ENCODE measurements at regions of chr3 and their contacts with region 1.

Region 1: GRCh38 chr3:32460031-32460749 is 42.5 kb downstream of the CMTM6 start:
- DNase-seq: peak; percentile 57 to 97 (median 80)
- ATAC-seq: peak; percentile 72
- H3K4me3 ChIP-seq: peak overlapping the region; percentile 34 to 37
- H3K4me3 Mint-ChIP-seq: peak overlapping the region; percentile 81
- H3K27ac ChIP-seq: peak overlapping the region; percentile 90 to 95
- H3K27ac Mint-ChIP-seq: no peak overlapping the region
- H3K4me1 ChIP-seq: peaks cover 79% of the 10 kb centered on the region
- H3K4me1 Mint-ChIP-seq: peaks cover 38% of the 10 kb centered on the region
- H3K27me3 ChIP-seq: no peaks in the 10 kb centered on the region
- H3K27me3 Mint-ChIP-seq: no peaks in the 10 kb centered on the region
- CTCF ChIP-seq: no peak

Region 2: DNA sequence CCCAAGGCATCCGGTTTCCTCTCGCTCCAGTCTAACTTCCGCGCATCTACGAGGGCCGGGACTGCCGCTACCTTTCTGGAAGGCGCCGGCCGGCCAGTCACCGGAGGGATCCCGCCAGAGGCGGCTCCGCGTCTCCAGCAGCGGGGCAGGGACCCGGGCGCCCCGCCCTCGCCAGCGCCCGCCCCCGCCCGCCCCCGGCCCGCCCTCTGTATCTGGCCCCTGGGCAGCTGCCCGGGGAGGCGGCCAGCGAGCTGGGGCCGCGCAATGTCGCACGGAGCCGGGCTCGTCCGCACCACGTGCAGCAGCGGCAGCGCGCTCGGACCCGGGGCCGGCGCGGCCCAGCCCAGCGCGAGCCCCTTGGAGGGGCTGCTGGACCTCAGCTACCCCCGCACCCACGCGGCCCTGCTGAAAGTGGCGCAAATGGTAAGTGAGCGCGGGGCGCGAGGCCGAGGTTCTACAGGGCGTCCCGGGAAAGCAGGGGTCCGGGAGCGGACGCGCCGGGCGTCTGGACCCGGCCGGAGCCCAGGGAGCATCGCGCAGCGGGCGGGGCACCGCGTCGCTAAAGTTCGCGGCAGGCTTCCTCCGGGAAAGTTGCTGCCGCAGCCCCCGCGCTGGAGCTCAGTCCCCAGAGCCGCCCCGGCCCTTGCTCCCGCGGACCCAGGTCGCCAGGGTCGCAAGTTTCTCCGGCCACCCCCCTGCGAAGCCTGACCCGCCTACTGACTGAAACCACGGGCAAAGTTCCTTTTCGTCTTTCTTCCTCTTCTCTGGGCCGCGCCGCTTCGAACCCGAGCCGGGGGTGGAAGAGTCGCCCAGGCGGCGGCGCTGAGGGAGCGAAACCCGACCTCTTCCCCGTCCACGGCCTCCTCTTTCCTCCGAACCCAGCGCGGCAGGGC is 68.3 kb before region 1 on chr3 and contains the start of gene CMTM7:
- CTCF ChIA-PET with region 1: interaction called, 105 read pairs
- POLR2A ChIA-PET with region 1: interaction called, 5 read pairs
- intact Hi-C with region 1: loop called in 1 of 2 experiments (anchors 1 kb)
- DNase-seq: peak; percentile 26 to 79 (median 61)
- ATAC-seq: peak; percentile 63
- H3K4me3 ChIP-seq: peak within 1 kb of the TSS; percentile 69 to 70
- H3K4me3 Mint-ChIP-seq: peak within 1 kb of the TSS; percentile 97
- H3K27ac ChIP-seq: peak within 1 kb of the TSS; percentile 73 to 77
- H3K27ac Mint-ChIP-seq: peak within 1 kb of the TSS; percentile 98
- H3K4me1 ChIP-seq: peaks cover 29% of the 10 kb centered on the region
- H3K4me1 Mint-ChIP-seq: peaks cover 65% of the 10 kb centered on the region
- H3K27me3 ChIP-seq: no peaks in the 10 kb centered on the region
- H3K27me3 Mint-ChIP-seq: no peaks in the 10 kb centered on the region
- CTCF ChIP-seq: no peak
- total RNA-seq, gene CMTM7: 18.8 to 19.5 TPM

Region 3: GRCh38 chr3:32414520-32415202 is 45.5 kb before region 1 on chr3:
- CTCF ChIA-PET with region 1: interaction called, 12 read pairs
- POLR2A ChIA-PET with region 1: interaction called, 9 read pairs
- intact Hi-C with region 1: loop called in 1 of 2 experiments (anchors 1 kb)
- DNase-seq: peak in 7 of 9 experiments; percentile 26 to 80 (median 63)
- ATAC-seq: peak; percentile 94
- H3K4me3 ChIP-seq: no peak overlapping the region
- H3K4me3 Mint-ChIP-seq: peak overlapping the region; percentile 55
- H3K27ac ChIP-seq: peak overlapping the region; percentile 57 to 80
- H3K27ac Mint-ChIP-seq: peak overlapping the region; percentile 97
- H3K4me1 ChIP-seq: peaks cover 56% of the 10 kb centered on the region
- H3K4me1 Mint-ChIP-seq: peaks cover 81% of the 10 kb centered on the region
- H3K27me3 ChIP-seq: no peaks in the 10 kb centered on the region
- H3K27me3 Mint-ChIP-seq: no peaks in the 10 kb centered on the region
- CTCF ChIP-seq: no peak

Region 4: DNA sequence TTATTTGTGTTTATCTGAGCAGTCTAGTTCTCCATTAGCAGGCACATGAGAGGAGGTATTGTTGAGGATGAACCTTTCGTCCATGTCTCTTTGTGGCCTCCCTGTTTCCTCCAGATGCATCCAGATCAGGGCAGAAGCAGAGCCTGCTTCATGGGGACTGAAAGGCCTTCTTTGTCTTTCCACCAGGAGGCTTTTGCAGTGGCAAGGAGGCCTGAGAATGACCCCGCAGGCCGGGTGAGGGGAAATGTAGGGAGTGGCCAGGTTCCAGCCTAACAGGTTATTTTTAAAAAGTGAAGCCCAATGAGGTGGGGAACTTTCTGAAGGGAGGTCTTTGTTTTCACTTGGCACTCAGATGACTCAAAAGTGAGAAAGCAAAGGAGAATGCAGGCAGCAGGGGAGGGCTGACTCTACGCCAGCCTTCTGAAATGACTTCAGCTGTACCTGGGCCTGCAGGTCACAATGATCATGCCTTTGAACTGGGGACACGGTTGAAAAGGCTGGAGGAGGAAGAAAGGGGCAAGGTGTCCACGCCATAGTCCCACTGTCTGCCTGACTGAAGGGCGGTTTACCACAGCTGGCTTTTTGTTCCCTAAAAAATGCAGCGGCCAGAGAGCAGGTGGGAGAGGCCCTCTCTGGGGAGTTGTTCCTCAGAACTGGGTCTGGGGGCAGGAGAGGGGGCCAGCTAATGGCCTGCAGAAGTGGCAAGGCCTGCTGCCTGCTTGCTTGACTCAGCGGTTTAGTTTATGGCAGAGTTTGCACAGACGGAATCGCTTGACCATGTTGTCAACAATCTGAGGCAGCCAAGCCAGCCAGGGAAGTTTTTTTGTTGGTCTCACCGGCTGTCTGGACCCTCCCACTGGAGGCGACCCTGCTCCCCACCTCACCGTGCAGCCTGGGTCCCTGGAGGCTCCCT is 39.8 kb before region 1 on chr3:
- CTCF ChIA-PET with region 1: interaction called, 13 read pairs
- POLR2A ChIA-PET with region 1: interaction called, 17 read pairs
- intact Hi-C with region 1: loop called (anchors 1 to 5 kb)
- DNase-seq: peak in 4 of 9 experiments; percentile 30 to 59 (median 49)
- ATAC-seq: peak; percentile 60
- H3K4me3 ChIP-seq: peak overlapping the region in 1 of 2 experiments; percentile 0
- H3K4me3 Mint-ChIP-seq: peak overlapping the region; percentile 73
- H3K27ac ChIP-seq: peak overlapping the region; percentile 15 to 54
- H3K27ac Mint-ChIP-seq: peak overlapping the region; percentile 98
- H3K4me1 ChIP-seq: peaks cover 91% of the 10 kb centered on the region
- H3K4me1 Mint-ChIP-seq: peaks cover 93% of the 10 kb centered on the region
- H3K27me3 ChIP-seq: no peaks in the 10 kb centered on the region
- H3K27me3 Mint-ChIP-seq: no peaks in the 10 kb centered on the region
- CTCF ChIP-seq: no peak

Region 5: DNA sequence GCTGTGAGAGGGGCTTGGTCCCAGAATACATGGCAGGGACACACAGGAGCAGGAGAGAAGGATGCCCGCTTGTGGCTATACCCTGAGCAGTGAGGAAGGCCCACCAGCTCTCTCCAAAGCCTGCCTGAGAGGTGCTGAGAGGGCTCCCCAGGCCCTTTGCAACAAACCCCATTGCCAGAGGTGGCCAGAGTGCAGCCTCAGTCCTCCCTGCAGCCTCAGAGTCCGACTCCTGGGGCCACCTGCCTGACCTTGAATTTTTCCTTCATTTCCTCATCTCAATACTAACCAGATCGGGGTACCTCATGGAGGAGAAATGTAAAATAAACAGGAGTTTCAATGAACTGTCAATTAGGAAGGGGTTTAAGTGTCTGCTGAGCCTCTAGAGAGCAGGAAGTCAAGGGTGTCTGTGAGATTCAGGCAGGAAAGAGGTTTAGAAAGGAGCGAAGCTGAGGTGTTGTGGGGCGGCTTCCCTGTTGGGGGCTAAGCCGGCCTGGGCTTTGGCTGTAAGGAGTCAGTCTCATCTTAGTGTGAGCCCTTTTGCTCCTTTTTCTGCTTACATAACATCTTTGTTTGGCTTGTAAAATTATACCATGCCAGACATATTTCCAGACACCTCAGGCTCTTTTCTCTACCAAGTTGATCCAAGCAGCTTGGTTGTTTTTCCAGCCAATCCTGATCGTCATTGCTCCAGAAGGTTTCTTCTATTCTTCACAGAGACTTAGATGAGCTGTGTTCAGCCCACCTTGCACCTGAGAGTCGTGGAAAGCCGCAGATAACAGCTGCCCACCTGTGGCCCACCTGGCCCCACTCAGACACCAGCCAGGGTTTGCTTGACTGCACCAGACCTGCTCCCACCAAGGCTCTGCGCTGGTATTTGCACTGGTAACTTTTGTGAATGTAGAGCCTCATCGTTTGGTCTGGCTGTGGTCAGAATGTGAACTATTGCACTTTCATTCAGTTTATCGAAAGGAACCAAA is 31.8 kb before region 1 on chr3:
- CTCF ChIA-PET with region 1: interaction called, 13 read pairs
- POLR2A ChIA-PET with region 1: interaction called, 22 read pairs
- intact Hi-C with region 1: loop called (anchors 1 to 5 kb)
- DNase-seq: peak in 8 of 9 experiments; percentile 29 to 82 (median 55)
- ATAC-seq: peak; percentile 59
- H3K4me3 ChIP-seq: peak overlapping the region in 1 of 2 experiments; percentile 26
- H3K4me3 Mint-ChIP-seq: peak overlapping the region; percentile 76
- H3K27ac ChIP-seq: peak overlapping the region; percentile 58 to 81
- H3K27ac Mint-ChIP-seq: peak overlapping the region; percentile 96
- H3K4me1 ChIP-seq: peaks cover 98% of the 10 kb centered on the region
- H3K4me1 Mint-ChIP-seq: peaks cover 94% of the 10 kb centered on the region
- H3K27me3 ChIP-seq: no peaks in the 10 kb centered on the region
- H3K27me3 Mint-ChIP-seq: no peaks in the 10 kb centered on the region
- CTCF ChIP-seq: no peak

Region 6: GRCh38 chr3:32438596-32439344 is 21.4 kb before region 1 on chr3:
- CTCF ChIA-PET with region 1: interaction called, 29 read pairs
- POLR2A ChIA-PET with region 1: interaction called, 22 read pairs
- intact Hi-C with region 1: loop called (anchors 1 to 2 kb)
- DNase-seq: peak in 4 of 9 experiments; percentile 10 to 49 (median 35)
- ATAC-seq: peak; percentile 56
- H3K4me3 ChIP-seq: no peak overlapping the region
- H3K4me3 Mint-ChIP-seq: peak overlapping the region; percentile 46
- H3K27ac ChIP-seq: peak overlapping the region in 1 of 2 experiments; percentile 31
- H3K27ac Mint-ChIP-seq: peak overlapping the region; percentile 85
- H3K4me1 ChIP-seq: peaks cover 53% of the 10 kb centered on the region
- H3K4me1 Mint-ChIP-seq: peaks cover 75% of the 10 kb centered on the region
- H3K27me3 ChIP-seq: no peaks in the 10 kb centered on the region
- H3K27me3 Mint-ChIP-seq: no peaks in the 10 kb centered on the region
- CTCF ChIP-seq: no peak

Region 7: GRCh38 chr3:32557643-32558352 is 97.6 kb after region 1 on chr3:
- CTCF ChIA-PET with region 1: no interaction called
- POLR2A ChIA-PET with region 1: no interaction called
- intact Hi-C with region 1: no loop called
- DNase-seq: no peak
- ATAC-seq: no peak
- H3K4me3 ChIP-seq: no peak overlapping the region
- H3K4me3 Mint-ChIP-seq: no peak overlapping the region
- H3K27ac ChIP-seq: no peak overlapping the region
- H3K27ac Mint-ChIP-seq: no peak overlapping the region
- H3K4me1 ChIP-seq: peaks cover 4% of the 10 kb centered on the region
- H3K4me1 Mint-ChIP-seq: peaks cover 50% of the 10 kb centered on the region
- H3K27me3 ChIP-seq: no peaks in the 10 kb centered on the region
- H3K27me3 Mint-ChIP-seq: no peaks in the 10 kb centered on the region
- CTCF ChIP-seq: no peak

Region 8: DNA sequence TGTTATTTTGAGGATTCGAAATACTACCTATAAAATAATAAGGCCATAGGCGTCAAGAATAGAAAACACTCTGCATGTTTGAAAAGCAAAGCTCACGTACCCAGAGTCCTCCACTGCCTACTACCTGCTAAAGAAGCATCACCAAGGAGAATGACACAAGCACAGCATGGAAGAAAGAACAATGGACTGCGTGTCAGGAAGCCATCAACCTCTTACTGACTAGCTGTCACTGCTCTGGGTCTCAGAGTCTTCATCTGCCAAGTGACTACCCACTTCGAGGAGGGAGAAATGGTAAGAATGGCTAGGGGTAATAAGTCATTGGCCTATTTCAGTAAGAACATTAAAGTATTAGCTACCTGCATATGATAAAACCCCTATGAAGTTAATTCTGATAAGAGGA is 1208.4 kb after region 1 on chr3:
- CTCF ChIA-PET with region 1: no interaction called
- POLR2A ChIA-PET with region 1: no interaction called
- intact Hi-C with region 1: no loop called
- DNase-seq: no peak
- ATAC-seq: no peak
- H3K4me3 ChIP-seq: no peak overlapping the region
- H3K4me3 Mint-ChIP-seq: no peak overlapping the region
- H3K27ac ChIP-seq: no peak overlapping the region
- H3K27ac Mint-ChIP-seq: no peak overlapping the region
- H3K4me1 ChIP-seq: no peaks in the 10 kb centered on the region
- H3K4me1 Mint-ChIP-seq: no peaks in the 10 kb centered on the region
- H3K27me3 ChIP-seq: no peaks in the 10 kb centered on the region
- H3K27me3 Mint-ChIP-seq: no peaks in the 10 kb centered on the region
- CTCF ChIP-seq: no peak